OCI-LY7 (cell line): ENCODE measurements at regions of chr2 and their contacts with region 1.

Region 1: DNA sequence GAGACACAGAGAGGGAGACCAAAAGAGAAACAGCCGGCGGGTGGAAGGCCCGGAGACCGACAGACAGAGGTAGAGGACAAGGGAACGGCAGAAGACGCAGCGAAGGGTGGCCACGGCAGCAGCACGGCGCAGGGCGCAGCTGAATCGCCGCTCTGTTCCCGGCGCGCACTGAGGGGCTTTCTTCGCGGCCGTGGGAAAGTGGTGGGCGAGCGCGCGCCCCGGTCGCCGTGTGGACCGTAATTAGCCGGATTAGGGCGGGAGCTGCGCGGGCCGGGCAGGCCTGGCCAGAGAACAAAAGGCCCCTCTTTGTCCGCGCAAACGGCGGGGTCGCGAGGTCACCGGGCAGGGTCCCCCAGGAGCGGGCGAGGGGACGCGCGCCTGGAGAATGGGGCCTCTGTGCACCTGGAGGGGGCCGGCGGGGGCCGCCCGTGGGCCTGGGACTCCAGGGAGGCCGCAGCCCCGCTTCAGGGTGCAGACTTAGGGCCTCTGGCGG is 158.3 kb downstream of the ZFP36L2 start:
- DNase-seq: no peak
- H3K4me3 ChIP-seq: no peak overlapping the region
- H3K27ac ChIP-seq: no peak overlapping the region
- H3K4me1 ChIP-seq: no peaks in the 10 kb centered on the region
- CTCF ChIP-seq: no peak

Region 2: GRCh38 chr2:43040084-43040854 is 27.8 kb before region 1 on chr2:
- CTCF ChIA-PET with region 1: no interaction called
- POLR2A ChIA-PET with region 1: no interaction called
- intact Hi-C with region 1: no loop called
- DNase-seq: no peak
- H3K4me3 ChIP-seq: no peak overlapping the region
- H3K27ac ChIP-seq: no peak overlapping the region
- H3K4me1 ChIP-seq: no peaks in the 10 kb centered on the region
- CTCF ChIP-seq: no peak

Region 3: GRCh38 chr2:43052204-43052943 is 15.7 kb before region 1 on chr2:
- CTCF ChIA-PET with region 1: interaction called, 10 read pairs
- POLR2A ChIA-PET with region 1: no interaction called
- intact Hi-C with region 1: no loop called
- DNase-seq: no peak
- H3K4me3 ChIP-seq: no peak overlapping the region
- H3K27ac ChIP-seq: no peak overlapping the region
- H3K4me1 ChIP-seq: no peaks in the 10 kb centered on the region
- CTCF ChIP-seq: no peak

Region 4: DNA sequence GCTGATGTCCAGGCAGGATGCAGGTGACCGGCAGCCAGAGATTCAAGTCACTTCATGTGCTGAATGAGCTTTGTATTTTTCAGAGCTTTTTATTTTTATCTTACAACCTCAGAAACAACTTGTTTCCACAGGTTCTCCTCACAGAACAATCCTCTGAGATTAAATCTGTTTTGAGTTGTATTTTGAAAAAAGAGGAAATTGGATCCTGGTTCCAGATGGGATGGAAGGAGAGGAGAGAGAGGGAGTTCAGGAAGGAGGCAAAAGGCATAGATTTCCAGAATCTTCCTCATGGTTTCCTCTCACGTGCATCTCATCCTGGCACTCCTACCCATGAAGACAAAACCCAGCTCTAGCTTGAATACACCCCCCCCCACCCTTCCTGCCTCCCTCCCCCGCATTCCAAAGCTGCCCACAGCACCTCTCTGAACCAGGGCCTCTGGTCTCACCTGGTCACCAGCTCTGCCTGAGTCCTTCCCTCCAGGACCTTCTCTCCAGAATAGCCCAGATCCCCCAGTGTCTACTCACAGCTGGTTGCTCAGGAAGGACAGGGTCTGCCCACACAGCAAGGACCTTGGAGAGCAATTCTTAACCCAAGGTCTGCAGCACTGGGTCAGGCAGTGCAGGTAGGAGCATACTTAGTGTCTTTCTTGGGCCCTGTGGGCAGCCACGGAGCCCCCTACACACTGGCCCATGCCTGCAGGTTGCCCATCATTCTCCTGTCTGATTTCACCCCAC is 53.7 kb after region 1 on chr2:
- CTCF ChIA-PET with region 1: interaction called, 15 read pairs
- POLR2A ChIA-PET with region 1: no interaction called
- intact Hi-C with region 1: no loop called
- DNase-seq: no peak
- H3K4me3 ChIP-seq: no peak overlapping the region
- H3K27ac ChIP-seq: no peak overlapping the region
- H3K4me1 ChIP-seq: peaks cover 33% of the 10 kb centered on the region
- CTCF ChIP-seq: no peak

Region 5: DNA sequence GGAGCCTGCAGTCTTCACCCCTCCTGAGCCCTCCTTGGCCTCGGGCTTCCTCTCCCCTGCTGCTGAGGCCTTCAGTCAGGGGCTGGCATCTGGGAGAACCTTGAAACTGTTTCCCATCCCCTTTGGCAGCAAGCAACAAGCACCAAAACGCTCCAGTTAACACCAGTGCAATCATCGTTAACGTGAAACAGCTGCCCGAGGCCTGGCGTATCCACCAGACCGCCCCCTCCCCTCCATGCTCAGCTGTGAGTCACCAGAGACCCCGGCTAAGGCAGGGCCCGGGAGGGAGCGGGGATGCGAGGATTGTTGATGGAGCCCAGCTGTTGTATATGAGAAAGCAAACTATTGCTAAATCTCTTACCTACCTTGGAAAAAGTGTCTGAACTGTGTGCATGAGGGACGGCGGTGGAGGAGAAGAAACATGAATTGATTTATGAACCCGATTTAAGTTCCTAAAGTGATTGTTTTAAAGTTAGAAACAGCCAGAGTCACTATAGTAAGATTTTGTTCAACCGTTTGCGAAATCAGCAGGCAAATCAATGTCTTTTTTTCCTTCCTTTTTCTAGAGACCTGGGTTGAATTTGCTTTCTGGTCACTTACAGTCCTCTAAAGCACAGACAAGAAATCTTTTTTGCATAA is 153.2 kb after region 1 on chr2:
- CTCF ChIA-PET with region 1: no interaction called
- POLR2A ChIA-PET with region 1: no interaction called
- intact Hi-C with region 1: no loop called
- DNase-seq: peak; percentile 54
- H3K4me3 ChIP-seq: peak overlapping the region; percentile 89
- H3K27ac ChIP-seq: peak overlapping the region; percentile 91
- H3K4me1 ChIP-seq: peaks cover 73% of the 10 kb centered on the region
- CTCF ChIP-seq: no peak

Region 6: DNA sequence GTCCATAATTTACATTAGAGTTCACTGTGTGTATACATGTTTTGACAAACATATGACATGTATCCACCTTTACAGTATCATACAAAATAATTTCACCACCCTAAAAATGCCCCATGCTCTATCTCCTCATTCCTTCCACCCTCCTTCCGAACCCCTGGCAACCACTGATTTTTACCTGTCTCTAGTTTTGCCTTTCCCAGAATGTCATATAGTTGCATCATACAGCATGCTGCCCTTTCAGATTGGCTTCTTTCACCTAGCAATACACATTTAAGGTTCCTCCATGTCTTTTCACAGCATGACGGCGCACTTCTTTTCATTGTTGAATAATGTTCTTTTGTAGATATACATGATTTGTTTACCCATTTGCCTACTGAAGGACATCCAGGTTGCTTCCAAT is 917.3 kb after region 1 on chr2:
- CTCF ChIA-PET with region 1: no interaction called
- POLR2A ChIA-PET with region 1: no interaction called
- intact Hi-C with region 1: no loop called
- DNase-seq: no peak
- H3K4me3 ChIP-seq: no peak overlapping the region
- H3K27ac ChIP-seq: no peak overlapping the region
- H3K4me1 ChIP-seq: no peaks in the 10 kb centered on the region
- CTCF ChIP-seq: no peak